ENCODE measurements at regions of chr11 and their contacts with region 1.

Region 1: DNA sequence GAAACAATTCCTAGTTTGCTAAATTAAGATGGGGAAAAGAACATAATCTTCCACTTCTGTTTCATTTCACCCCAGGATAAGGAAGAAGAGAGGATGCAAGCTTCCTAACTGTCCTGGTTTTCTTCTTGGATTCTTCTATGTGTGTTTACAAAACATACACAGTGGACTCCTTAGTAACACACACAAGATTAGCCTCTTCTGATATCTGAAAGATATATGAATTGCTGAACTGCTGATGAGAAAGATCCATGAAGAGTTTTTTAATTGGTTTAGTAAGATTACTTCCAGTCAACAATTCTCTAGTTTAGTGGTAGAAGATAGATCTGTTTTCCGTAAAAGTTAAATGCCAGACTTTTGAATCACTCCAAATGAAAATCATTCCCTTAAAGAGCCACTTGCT is 86.8 kb downstream of the WT1 start:
- DNase-seq: no peak
- H3K4me3 ChIP-seq: no peak overlapping the region
- H3K27ac ChIP-seq: no peak overlapping the region
- H3K4me1 ChIP-seq: no peaks in the 10 kb centered on the region
- H3K27me3 ChIP-seq: no peaks in the 10 kb centered on the region
- CTCF ChIP-seq: no peak
- EP300 ChIP-seq: no peak
- POLR2A ChIP-seq: no peak
- RAD21 ChIP-seq: no peak

Region 2: DNA sequence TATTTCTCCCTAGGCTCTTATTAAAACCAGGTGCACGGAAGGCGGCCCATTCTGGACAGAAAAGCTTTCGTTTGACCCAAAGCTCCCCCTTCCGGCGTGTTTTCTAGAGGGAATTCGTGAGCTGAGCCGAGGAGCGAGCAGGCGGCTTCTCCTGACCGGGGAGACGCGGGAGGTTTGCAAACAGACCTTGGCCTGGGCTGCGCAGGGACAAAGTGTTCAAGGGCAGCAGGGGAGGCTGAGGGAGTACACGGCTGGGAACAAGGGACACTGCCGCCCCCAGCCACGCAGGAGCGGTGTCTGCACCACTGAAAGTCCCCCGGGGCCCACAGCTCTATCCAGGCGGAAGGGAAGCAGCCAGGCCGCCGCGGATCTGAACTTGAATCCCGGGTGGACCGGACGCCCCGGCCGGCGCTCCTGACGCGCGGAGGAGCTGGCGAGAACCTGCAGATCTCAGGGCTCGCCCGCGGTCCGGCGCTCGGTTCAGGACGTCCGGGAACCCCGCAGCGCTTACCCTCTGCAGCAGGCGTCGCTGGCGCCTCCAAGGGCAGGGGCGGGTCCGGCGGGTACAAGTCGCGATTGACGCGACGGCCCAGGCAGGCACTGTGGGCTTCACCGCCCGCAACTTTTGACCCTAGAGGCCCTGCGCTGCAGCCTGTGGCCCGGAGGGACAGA is 15.0 kb before region 1 on chr11:
- CTCF ChIA-PET with region 1: interaction called, 30 read pairs
- POLR2A ChIA-PET with region 1: no interaction called
- DNase-seq: peak; percentile 38 to 84
- H3K4me3 ChIP-seq: peak overlapping the region; percentile 40 to 65 (median 54)
- H3K27ac ChIP-seq: no peak overlapping the region
- H3K4me1 ChIP-seq: peaks cover 2 to 7% (median 5%) of the 10 kb centered on the region in 4 experiments; a peak in 3 of 7 replicates
- H3K27me3 ChIP-seq: peaks cover 0 to 28% (median 19%) of the 10 kb centered on the region in 4 experiments; a peak in 6 of 7 replicates
- CTCF ChIP-seq: peak; percentile 25 to 45 (median 40)
- EP300 ChIP-seq: no peak
- POLR2A ChIP-seq: 0 out of 3 replicates have a peak, but pooled peaks of 1 of the 2 experiments have one; percentile 25
- RAD21 ChIP-seq: peak in 1 of 2 experiments; percentile 31; a peak in 1 of 4 replicates

Measured in H1 (cell line).